ENCODE measurements at regions of chr7 and their contacts with region 1.

Region 1: GRCh38 chr7:44333911-44334733 is 8.7 kb upstream of the CAMK2B start:
- DNase-seq: no peak

Region 2: GRCh38 chr7:44449584-44449928 is 115.4 kb after region 1 on chr7:
- intact Hi-C with region 1: no loop called
- DNase-seq: no peak

Region 3: DNA sequence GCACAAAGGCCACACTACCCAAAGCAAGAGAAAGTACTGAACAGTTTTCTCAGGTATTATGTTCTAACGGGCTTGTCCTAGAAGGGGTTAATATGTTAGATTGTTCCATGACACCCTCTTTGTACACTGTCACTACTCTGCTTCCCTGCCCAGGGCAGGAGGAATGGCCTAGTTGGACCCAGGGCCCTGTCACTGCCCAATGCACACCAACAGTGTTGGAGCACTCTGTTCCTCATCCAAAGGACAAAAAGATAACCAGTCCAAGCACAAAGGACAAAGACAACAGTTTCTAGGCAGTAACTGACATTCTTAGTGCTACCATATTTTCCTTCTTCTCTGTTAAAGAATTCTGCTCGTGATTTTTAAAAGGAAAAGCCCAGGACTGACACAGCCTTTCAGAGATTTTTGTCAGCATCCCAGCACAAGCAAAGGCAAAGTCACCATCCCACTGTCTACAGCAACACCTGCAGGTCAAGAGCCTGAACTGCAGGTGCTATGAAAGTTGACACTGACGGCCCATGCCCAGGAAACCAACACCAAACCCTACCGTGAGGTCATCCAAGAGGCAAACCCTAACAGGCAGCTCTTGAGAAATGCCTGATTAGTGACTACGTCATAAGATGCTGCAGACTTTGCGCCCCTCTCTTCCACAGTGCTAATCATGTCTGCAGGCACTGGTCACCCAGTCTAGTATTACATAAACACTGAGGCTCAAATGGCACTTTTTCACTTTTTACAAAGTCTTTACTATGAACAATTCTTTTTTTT is 143.1 kb after region 1 on chr7:
- intact Hi-C with region 1: loop called (anchors 10 kb)
- DNase-seq: peak; percentile 79

Measured in cardiac septum (tissue), 1 donor.